Activated CD4-positive, alpha-beta T cell treated with anti-CD3 and anti-CD28 coated beads, Interleukin-2, amount 10 ng/mL, durations not matched to agents 24 days and 14 days (primary cell): ENCODE measurements at regions of chr1 and their contacts with region 1.

Region 1: DNA sequence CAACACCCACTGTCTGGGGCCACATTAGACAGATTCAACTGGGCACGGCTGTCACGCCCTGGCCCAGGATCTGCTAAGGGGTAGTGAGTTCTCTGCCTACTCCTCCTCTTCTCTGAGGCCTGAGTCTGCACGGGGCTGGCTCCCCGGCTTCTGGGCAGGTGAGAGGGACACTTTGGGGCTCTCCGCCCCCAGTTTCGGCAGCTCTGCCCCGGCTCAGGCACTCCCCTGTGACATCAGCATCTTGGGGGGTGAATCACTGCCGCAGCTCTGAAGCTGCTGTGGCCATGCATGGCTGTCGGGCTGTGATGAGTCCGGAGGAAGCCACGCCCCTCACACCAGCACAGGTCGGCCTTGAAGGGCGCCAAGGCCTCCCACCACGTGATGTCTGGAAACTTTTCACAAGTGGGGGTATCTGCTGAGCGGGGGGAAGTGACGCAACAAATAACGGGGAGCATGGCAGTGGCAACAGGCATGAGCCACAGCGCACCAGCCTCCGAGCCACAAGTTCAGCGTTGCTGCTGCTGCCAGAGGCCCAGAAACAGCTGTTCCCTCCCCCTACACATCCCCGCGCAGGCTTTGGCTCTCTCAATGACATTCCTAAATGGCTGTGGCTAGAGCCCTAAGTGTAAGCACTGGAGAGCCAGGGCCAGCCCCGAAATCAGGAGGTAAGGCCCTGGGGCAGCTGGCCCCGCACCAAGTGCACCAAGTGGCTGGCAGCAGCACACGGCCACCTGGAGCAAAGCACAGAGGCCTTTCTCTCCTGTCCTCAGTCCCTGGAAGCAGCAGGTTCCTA is 26.3 kb downstream of the ZBTB17 start:
- DNase-seq: peak; percentile 87
- H3K4me3 Mint-ChIP-seq: peak overlapping the region; percentile 67
- H3K27ac Mint-ChIP-seq: peak overlapping the region; percentile 94
- H3K4me1 Mint-ChIP-seq: peaks cover 73% of the 10 kb centered on the region
- H3K27me3 Mint-ChIP-seq: no peaks in the 10 kb centered on the region

Region 2: DNA sequence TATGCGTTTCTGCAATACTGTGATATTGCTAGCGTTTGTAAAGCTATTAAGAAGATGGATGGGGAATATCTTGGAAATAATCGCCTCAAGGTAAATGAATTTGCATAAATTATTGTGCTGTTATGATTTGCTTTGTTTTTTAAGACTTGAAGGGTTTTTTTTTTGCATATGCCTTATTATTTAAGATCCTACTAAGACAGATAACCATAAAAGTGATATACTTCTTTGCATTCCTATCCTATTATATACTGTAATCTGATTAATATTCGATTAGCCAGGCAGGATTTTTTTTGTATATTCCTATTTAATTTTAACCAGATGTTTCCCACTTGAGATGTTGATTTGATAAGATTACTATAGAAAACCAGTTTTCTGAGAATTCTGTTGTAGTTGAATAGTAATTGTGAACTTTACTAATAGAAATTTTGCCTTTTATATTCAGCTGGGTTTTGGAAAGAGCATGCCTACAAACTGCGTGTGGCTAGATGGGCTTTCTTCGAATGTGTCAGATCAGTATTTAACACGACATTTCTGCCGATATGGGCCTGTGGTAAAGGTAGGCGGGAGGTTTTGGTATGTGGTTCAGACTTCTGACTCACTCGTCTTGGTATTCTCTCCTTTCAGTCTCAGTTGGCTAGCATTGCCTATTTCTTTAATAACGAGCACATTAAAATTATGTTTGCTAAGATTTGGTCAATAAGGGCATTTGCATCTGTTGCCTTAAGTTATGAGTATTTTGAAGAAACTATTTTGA is 30.5 kb before region 1 on chr1:
- intact Hi-C with region 1: loop called (anchors 1 kb)
- DNase-seq: peak; percentile 88
- H3K4me3 Mint-ChIP-seq: peak overlapping the region; percentile 66
- H3K27ac Mint-ChIP-seq: peak overlapping the region; percentile 72
- H3K4me1 Mint-ChIP-seq: peaks cover 35% of the 10 kb centered on the region
- H3K27me3 Mint-ChIP-seq: no peaks in the 10 kb centered on the region

Region 3: DNA sequence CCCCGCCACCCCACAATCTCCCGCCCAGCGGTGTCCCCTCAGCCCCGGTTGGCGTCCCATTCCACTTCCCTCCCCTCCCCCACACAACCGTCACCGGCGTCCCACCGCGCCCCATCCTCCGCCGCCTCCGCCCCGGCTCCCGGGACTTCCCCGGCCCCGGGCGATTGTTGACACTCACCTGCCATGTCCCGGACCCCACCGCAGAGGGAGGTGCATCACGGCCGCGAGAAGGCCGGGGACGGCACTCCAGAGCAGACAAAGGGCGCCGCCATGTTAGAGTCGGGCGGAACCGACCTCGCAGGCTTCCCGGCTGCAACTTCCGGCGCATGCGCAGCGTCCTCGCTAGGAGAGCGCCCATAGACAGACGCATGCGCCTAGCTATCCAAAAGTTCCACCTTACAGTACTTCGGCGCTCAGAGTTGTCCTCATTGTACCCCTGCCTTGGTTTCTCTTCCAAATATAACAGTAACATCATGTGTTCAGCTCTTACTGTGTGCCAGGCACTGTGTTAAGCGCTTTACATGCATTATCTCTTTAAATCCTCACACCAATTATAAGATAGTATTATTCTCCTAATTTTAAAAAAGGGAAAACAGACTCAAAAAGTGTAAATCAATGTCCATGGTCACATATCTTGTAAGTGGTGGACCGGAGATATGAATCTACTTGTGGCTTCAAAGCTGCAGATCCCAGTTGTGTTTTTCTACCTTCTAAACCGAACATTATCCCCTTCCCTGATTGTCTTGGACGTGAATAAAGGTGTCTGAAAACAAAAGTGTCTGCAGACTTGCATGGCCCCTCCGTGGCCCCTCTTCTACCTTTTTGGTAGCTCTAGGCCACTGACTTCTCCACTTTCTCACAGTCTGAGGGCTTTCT is 26.4 kb after region 1 on chr1 and contains the start of gene ZBTB17:
- intact Hi-C with region 1: loop called (anchors 1 kb)
- DNase-seq: peak; percentile 99
- H3K4me3 Mint-ChIP-seq: peak within 1 kb of the TSS; percentile 90
- H3K27ac Mint-ChIP-seq: peak within 1 kb of the TSS; percentile 93
- H3K4me1 Mint-ChIP-seq: peaks cover 40% of the 10 kb centered on the region
- H3K27me3 Mint-ChIP-seq: no peaks in the 10 kb centered on the region
- total RNA-seq, gene ZBTB17: 60.9 and 63.9 TPM in 2 replicates

Region 4: GRCh38 chr1:16138772-16139221 is 189.1 kb after region 1 on chr1:
- intact Hi-C with region 1: no loop called
- DNase-seq: no peak
- H3K4me3 Mint-ChIP-seq: no peak overlapping the region
- H3K27ac Mint-ChIP-seq: no peak overlapping the region
- H3K4me1 Mint-ChIP-seq: peaks cover 9% of the 10 kb centered on the region
- H3K27me3 Mint-ChIP-seq: peaks cover 6% of the 10 kb centered on the region

Region 5: DNA sequence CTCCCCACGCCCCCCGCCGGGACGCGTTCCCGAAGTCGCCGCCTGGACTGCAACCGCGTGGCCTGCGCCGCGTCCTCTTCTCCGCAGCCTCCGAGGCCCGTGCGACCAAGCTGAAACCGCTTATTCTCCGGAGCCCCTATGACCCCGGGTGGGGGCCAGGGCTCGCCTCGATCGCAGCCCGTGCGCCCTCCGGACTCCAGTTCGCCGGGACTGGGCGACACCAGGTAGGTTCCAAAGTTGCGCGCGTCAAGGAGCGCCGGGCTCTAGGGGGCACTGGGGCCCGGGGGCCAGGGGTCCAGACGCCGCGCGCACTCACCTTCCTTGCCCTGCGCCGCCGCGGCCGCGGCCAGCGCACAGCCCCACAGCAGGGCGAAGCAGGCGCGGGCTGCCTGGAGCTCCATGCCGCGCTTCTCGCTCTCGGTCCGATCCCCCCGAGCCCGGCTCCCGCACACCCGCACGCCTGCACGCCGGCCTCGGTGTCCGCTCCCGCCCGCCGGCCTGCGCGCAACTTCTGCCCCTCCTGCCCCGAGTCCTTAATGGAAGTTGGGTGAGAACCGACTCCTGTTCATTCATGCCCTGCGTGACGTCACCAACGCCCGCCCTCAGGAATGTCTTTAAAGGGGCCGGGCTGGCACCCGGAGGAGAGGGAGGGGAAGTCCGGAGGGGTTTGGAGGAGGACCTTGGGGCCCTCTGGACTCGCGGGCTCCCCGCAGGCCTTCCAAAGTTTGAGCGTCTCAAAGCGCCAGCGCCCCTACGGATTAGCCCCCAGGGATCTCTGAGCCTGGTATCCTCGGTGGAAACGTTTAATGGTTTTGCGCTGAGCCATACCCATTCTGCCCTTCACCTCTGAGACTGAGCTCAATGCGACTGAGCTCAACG is 206.1 kb after region 1 on chr1 and contains the start of gene EPHA2:
- intact Hi-C with region 1: no loop called
- DNase-seq: no peak
- H3K4me3 Mint-ChIP-seq: peak within 1 kb of the TSS; percentile 59
- H3K27ac Mint-ChIP-seq: no peak within 1 kb of the TSS
- H3K4me1 Mint-ChIP-seq: peaks cover 29% of the 10 kb centered on the region
- H3K27me3 Mint-ChIP-seq: peaks cover 53% of the 10 kb centered on the region
- total RNA-seq, gene EPHA2: not detected in 2 replicates